ENCODE measurements at regions of chr10 and their contacts with region 1.

Region 1: DNA sequence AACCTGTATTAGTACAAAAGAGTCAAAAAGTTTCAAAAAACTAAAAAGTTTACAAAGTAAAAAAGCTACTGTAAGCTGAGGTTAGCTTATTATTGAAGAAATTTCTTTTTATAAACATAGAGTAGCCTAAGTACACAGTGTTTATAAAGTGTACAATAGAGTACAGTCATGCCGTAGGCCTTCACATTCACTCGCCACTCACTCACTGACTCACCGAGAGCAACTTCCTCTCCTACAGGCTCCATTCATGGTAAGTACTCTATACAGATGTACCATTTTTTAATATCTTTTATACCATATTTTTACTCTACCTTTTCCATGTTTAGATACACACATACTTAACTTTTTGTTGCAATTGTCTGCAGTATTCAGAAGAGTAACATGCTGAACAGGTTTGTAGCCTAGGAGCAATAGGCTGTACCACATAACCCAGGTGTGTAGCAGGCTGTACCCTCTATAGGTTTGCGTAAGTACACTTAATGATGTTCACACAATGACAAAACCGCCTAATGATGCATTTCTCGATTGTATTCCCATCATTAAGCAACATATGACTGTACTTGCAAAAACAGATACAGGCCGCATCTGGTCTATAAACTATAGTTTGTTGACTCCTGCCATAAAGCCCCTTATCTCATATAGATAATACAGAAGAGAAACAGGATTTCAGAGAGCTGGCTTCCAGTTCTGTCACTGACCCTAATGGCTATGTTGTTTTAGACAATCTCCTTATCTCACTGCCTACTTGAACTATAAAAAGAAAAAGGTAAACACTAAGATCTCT is 438.8 kb downstream of the HTR7 start:
- DNase-seq: peak; percentile 85
- ATAC-seq: peak; percentile 99
- H3K4me3 ChIP-seq: no peak overlapping the region
- H3K27ac ChIP-seq: peak overlapping the region; percentile 84
- H3K4me1 ChIP-seq: peaks cover 28% of the 10 kb centered on the region
- H3K27me3 ChIP-seq: no peaks in the 10 kb centered on the region
- CTCF ChIP-seq: no peak

Region 2: GRCh38 chr10:90227217-90227656 is 191.8 kb before region 1 on chr10:
- CTCF ChIA-PET with region 1: no interaction called
- POLR2A ChIA-PET with region 1: no interaction called
- intact Hi-C with region 1: loop called (anchors 5 kb)
- DNase-seq: peak; percentile 93
- ATAC-seq: peak; percentile 85
- H3K4me3 ChIP-seq: no peak overlapping the region
- H3K27ac ChIP-seq: peak overlapping the region; percentile 96
- H3K4me1 ChIP-seq: peaks cover 37% of the 10 kb centered on the region
- H3K27me3 ChIP-seq: no peaks in the 10 kb centered on the region
- CTCF ChIP-seq: no peak

Region 3: DNA sequence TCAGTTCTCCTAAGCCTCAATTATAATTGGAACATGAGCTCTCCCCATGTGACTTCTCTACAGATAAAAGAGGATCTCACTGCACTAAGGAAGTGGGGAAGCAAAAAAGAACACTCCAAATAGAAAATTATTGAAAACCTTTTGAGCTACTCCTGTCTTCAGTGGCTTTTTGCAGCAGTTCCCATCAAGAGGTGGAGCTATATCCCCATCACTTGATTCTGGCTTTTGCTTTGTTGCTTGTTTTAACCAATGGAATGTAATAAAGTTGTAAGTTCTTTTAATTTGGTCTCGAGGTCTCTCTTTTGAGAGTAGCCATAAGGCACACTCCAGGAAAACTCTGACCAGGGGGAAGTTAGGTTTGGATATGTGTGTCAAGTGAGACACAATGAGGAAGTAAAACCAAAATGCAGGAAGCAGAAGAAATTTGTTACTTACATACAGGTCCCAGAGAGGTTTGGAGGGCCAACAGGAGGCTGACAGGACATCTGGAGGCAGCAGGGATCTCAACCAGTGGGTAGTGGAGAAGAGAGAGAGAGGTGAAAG is 130.6 kb before region 1 on chr10:
- CTCF ChIA-PET with region 1: no interaction called
- POLR2A ChIA-PET with region 1: interaction called, 3 read pairs
- intact Hi-C with region 1: loop called (anchors 2 kb)
- DNase-seq: peak; percentile 53
- ATAC-seq: peak; percentile 66
- H3K4me3 ChIP-seq: no peak overlapping the region
- H3K27ac ChIP-seq: peak overlapping the region; percentile 42
- H3K4me1 ChIP-seq: peaks cover 19% of the 10 kb centered on the region
- H3K27me3 ChIP-seq: no peaks in the 10 kb centered on the region
- CTCF ChIP-seq: peak; percentile 63

Region 4: GRCh38 chr10:90306187-90306586 is 112.9 kb before region 1 on chr10:
- CTCF ChIA-PET with region 1: no interaction called
- POLR2A ChIA-PET with region 1: no interaction called
- intact Hi-C with region 1: loop called (anchors 2 kb)
- DNase-seq: peak; percentile 86
- ATAC-seq: peak; percentile 98
- H3K4me3 ChIP-seq: no peak overlapping the region
- H3K27ac ChIP-seq: peak overlapping the region; percentile 45
- H3K4me1 ChIP-seq: peaks cover 13% of the 10 kb centered on the region; the same call in 1 of the 2 replicates
- H3K27me3 ChIP-seq: no peaks in the 10 kb centered on the region
- CTCF ChIP-seq: no peak

Region 5: DNA sequence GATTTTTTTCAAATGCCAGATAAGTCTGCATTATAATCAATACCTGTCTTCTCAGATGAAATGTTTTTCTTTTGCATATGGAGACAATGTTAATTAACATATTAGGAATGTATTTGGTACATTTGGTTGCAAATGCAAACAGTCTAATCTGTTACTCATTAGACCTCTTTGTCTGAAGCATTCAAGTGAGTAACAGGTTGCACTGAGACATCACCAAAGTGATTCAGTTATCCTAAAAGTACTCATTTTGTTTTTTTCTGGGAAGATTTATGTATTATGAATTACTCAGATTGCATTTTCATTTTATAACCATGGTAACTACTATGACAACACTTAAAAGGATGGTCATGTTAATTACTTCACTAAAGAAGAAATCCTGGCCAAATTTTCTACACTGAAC is 74.8 kb before region 1 on chr10:
- CTCF ChIA-PET with region 1: no interaction called
- POLR2A ChIA-PET with region 1: no interaction called
- intact Hi-C with region 1: loop called (anchors 2 kb)
- DNase-seq: peak; percentile 22
- ATAC-seq: no peak; the same call in 1 of the 2 replicates
- H3K4me3 ChIP-seq: no peak overlapping the region
- H3K27ac ChIP-seq: no peak overlapping the region
- H3K4me1 ChIP-seq: peaks cover 18% of the 10 kb centered on the region
- H3K27me3 ChIP-seq: no peaks in the 10 kb centered on the region
- CTCF ChIP-seq: no peak

Region 6: DNA sequence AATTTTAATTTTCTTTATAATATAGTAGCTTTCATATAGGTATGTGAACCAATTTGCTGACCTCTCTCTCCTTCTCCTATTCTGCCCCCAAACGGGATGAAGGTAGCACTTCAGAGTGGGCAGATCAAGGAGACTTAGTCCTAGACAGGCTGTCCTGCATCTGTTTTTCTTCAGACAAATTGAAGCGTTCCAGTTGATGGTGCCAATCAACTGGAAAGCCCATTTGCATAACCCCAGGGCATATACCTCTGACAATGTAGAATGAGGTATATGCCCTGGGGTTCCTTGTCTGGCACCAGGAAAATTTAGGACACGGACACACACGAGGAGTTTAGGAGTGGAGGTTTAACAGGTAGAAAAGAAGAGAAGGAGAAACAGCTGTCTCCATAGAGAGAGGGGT is 64.1 kb before region 1 on chr10:
- CTCF ChIA-PET with region 1: no interaction called
- POLR2A ChIA-PET with region 1: no interaction called
- intact Hi-C with region 1: no loop called
- DNase-seq: no peak
- ATAC-seq: no peak
- H3K4me3 ChIP-seq: no peak overlapping the region
- H3K27ac ChIP-seq: no peak overlapping the region
- H3K4me1 ChIP-seq: no peaks in the 10 kb centered on the region
- H3K27me3 ChIP-seq: no peaks in the 10 kb centered on the region
- CTCF ChIP-seq: no peak

Region 7: GRCh38 chr10:90579602-90580242 is 160.7 kb after region 1 on chr10:
- CTCF ChIA-PET with region 1: no interaction called
- POLR2A ChIA-PET with region 1: no interaction called
- intact Hi-C with region 1: loop called (anchors 10 kb)
- DNase-seq: peak; percentile 80
- ATAC-seq: peak; percentile 73
- H3K4me3 ChIP-seq: no peak overlapping the region
- H3K27ac ChIP-seq: peak overlapping the region; percentile 46
- H3K4me1 ChIP-seq: peaks cover 12% of the 10 kb centered on the region
- H3K27me3 ChIP-seq: no peaks in the 10 kb centered on the region
- CTCF ChIP-seq: peak; percentile 55

Region 8: DNA sequence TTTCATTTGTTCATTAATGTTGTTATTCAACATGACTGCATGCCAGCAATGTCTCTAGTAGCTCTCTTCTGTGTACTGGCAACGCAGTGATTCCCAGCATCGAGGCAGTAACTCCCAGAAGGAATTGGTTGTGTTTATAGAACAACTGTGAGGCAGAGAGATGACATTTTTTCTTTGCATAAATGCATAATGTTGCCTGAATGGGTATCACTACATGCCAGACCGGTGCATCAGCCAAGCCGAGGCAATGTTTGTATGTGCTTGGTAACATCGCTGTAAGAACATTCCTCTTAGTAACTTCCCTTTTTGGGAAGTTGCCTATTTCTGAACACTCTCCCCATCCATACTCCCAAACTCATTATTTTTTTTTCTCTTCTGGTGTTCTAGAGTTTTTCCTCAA is 255.9 kb after region 1 on chr10:
- CTCF ChIA-PET with region 1: no interaction called
- POLR2A ChIA-PET with region 1: no interaction called
- intact Hi-C with region 1: loop called (anchors 10 kb)
- DNase-seq: peak; percentile 81
- ATAC-seq: peak; percentile 88
- H3K4me3 ChIP-seq: peak overlapping the region; percentile 34; the same call in 1 of the 2 replicates
- H3K27ac ChIP-seq: peak overlapping the region; percentile 86
- H3K4me1 ChIP-seq: peaks cover 22% of the 10 kb centered on the region
- H3K27me3 ChIP-seq: no peaks in the 10 kb centered on the region
- CTCF ChIP-seq: no peak

Region 9: DNA sequence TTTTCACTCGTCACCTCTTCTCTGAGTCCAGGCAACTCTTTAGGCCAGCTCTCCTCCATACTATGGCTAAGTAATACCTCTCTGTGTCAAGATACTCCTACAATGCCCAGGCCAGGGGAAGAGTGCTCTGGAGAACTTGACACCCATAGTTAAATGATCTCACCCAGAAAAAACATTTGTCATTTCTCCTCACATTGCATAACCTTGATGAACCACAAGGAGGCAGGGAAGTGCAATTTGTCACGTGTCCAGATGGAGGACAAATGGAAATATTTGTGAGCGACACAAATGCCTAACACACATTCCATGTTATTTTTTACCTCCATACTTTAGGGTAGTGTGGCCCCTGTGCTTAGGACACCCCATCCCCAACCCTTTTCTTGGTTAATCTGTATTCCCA is 360.5 kb after region 1 on chr10:
- CTCF ChIA-PET with region 1: no interaction called
- POLR2A ChIA-PET with region 1: no interaction called
- intact Hi-C with region 1: no loop called
- DNase-seq: peak; percentile 56
- ATAC-seq: peak; percentile 48
- H3K4me3 ChIP-seq: no peak overlapping the region
- H3K27ac ChIP-seq: no peak overlapping the region
- H3K4me1 ChIP-seq: no peaks in the 10 kb centered on the region
- H3K27me3 ChIP-seq: no peaks in the 10 kb centered on the region
- CTCF ChIP-seq: peak; percentile 50